Posterior cingulate gyrus (tissue), 11 donors: ENCODE measurements at regions of chr12 and their contacts with region 1.

Region 1: GRCh38 chr12:49580572-49581535 is 12.9 kb upstream of the MCRS1 start:
- DNase-seq: peak; percentile 41 to 96 (median 81)

Region 2: DNA sequence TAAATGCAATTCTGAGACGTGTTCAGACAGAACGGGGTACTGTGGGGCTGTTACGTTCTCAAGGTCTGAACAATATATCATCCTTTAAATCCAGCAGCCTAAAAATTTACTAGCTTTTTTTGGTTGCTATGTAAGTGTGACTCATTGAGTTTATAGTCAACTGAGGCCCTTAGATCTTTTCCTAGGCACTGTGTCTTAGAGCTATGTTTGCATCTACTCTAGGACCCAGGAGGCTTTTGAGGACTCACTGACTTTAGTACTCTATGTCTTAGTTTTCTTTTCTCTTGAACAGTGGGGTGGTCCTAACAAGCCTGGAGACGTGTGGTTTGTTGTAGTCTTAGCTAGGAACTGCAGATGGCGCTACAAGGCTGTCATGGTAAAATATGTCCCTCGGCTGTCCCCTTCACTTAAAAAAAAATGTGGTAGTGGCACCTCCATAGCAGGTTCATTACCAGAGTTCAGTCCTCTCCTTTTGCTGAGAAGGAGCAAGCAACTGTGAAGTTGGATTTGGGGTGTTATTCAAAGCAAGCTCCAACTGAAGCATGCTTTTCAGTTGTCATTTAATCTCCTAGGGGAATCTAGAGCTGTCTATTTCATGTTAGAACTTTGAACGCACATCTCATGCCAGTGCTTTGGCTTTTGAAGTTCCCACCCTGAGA is 222.2 kb before region 1 on chr12:
- intact Hi-C with region 1: loop called (anchors 5 kb)
- DNase-seq: peak in 5 of 10 donors; percentile 33 to 65 (median 34)